GM23248 (cell line): ENCODE measurements at regions of chr12 and their contacts with region 1.

Region 1: GRCh38 chr12:14239935-14240872 is 125.3 kb upstream of the ATF7IP start:
- DNase-seq: no peak
- H3K4me3 ChIP-seq: peak overlapping the region; percentile 22; the same call in 1 of the 2 replicates
- H3K27ac ChIP-seq: no peak overlapping the region
- H3K4me1 ChIP-seq: peaks cover 3% of the 10 kb centered on the region; the same call in 1 of the 2 replicates
- H3K27me3 ChIP-seq: no peaks in the 10 kb centered on the region

Region 2: DNA sequence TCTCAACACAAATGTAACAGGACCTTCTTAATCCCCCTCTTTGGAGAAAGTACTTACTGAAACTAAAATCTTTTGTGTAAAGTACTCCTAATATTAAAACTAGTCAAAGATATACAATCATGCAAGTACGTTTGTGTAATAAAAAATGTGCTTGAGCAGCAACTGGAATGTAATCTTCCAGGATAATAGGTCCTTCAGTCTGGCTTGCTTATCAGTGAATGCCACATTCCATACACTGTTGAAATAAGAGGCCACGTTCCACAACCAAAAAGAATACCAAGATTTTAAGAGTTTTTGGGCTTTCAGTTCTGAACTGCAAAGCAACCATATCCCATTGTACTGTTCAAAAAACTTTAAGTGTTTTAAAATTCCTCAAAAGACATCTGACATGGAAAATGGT is 232.6 kb before region 1 on chr12:
- in situ Hi-C with region 1: no loop called
- DNase-seq: no peak
- H3K4me3 ChIP-seq: no peak overlapping the region
- H3K27ac ChIP-seq: no peak overlapping the region
- H3K4me1 ChIP-seq: no peaks in the 10 kb centered on the region
- H3K27me3 ChIP-seq: no peaks in the 10 kb centered on the region

Region 3: GRCh38 chr12:14629832-14630710 is 389.9 kb after region 1 on chr12:
- in situ Hi-C with region 1: loop called (anchors 10 kb)
- DNase-seq: peak; percentile 78
- H3K4me3 ChIP-seq: no peak overlapping the region
- H3K27ac ChIP-seq: no peak overlapping the region
- H3K4me1 ChIP-seq: no peaks in the 10 kb centered on the region
- H3K27me3 ChIP-seq: peaks cover 5% of the 10 kb centered on the region; the same call in 1 of the 2 replicates